Gastrocnemius medialis (tissue), 4 donors: ENCODE measurements at regions of chr1 and their contacts with region 1.

Region 1: DNA sequence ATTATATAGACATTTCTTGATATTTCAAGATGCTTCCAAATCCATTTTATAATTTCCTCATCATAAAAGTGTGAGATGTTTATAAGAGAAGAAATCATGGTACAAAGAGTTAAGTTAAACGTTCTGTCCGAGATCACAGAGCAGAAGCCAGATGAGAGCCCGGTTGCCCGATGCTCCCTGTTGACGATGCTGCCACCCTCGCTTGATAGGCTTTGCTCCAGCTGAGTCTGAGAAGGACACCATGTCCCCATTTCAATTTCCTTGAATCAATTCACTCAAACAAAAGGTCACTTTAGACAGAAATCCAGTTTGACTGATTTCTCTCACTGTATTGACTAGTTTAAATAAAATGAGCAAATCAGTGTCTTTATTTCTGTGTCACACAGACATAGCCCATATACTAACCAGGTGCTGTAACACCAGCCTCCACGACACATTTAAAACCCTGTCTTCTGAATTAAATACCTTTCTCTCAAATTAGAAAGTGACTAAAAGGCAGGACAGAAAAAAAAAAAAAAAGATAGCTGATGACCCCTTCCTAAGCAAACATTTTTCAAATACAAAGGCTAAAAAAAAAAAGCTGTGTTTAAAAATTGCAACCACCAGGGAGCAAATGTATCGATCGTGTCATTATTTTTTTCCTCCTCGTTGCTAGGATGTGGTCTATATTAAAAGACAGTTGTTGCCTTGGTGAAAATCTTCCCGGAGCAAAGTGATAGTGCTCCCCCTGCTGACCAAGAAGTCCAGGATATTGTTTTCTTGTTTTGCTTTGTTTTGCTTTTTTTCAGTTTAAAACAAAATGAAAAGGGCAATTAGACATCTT is 35.2 kb downstream of the DNASE2B start:
- DNase-seq: peak; percentile 24 to 26
- ATAC-seq: peak; percentile 84 to 88
- H3K4me3 ChIP-seq: peak overlapping the region; percentile 37 to 44 (median 44)
- H3K27ac ChIP-seq: peak overlapping the region in 2 of 4 donors; percentile 15 to 19
- H3K4me1 ChIP-seq: peaks cover 0 to 5% of the 10 kb centered on the region in 2 donors
- H3K27me3 ChIP-seq: no peaks in the 10 kb centered on the region
- CTCF ChIP-seq: peak; percentile 61 to 76 (median 74)
- POLR2A ChIP-seq: no peak

Region 2: DNA sequence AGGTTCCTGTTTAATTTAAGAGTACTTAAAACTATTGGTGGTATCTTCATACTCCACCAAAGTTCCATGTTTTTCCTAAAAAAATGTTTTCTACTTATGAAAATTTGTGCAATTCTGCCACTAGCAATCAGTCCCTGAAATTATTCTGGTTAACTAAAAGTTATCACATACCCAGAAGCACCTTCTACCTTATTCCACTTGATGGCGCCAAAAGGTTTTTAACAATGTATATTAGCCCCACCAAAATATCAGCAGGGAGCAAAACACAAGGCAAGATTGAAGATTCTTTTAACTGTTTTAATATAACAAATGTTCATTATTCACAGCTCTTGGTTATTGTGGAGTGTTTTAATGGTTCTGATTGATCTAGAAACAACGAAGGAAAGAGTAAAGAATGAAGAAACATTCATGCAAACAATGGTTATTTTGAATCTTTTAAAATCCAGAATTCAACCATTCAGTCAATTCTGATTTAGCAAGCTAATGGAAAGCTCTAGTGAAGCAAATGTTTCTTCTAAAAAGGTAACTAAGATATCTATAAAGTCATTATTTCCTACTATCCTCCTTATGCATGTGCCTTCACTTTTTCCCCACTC is 501.7 kb before region 1 on chr1:
- in situ Hi-C with region 1: loop called in 3 of 4 experiments (anchors 25 kb)
- intact Hi-C with region 1: loop called (anchors 5 kb)
- DNase-seq: no peak
- ATAC-seq: peak; percentile 61 to 88
- H3K4me3 ChIP-seq: no peak overlapping the region
- H3K27ac ChIP-seq: no peak overlapping the region
- H3K4me1 ChIP-seq: peaks cover 8 to 9% of the 10 kb centered on the region in 2 donors
- H3K27me3 ChIP-seq: no peaks in the 10 kb centered on the region
- CTCF ChIP-seq: peak in 4 of 5 experiments; percentile 58 to 78 (median 68)
- POLR2A ChIP-seq: no peak

Region 3: DNA sequence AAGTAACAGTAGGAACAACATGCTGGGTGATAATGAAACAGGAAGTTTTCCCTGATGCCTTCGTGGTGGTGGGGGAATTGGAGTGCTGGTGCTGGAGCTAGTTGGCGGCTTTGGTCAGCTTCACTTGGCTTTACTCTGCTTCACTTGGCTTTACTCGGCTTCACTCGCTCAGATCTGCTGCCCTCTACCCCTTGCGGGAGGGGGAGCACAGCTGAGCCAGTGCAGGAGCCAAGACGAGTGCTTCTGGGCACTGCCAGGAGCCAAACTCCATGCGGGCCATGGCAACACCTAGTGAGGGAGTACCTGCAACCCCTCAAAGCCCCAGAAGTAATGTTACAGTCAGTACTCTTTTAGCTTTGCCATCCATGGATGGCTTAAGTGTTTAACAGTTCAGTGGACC is 300.0 kb before region 1 on chr1:
- in situ Hi-C with region 1: loop called in 1 of 4 experiments (anchors 10 kb)
- intact Hi-C with region 1: no loop called
- DNase-seq: no peak
- ATAC-seq: no peak
- H3K4me3 ChIP-seq: no peak overlapping the region
- H3K27ac ChIP-seq: no peak overlapping the region
- H3K4me1 ChIP-seq: no peaks in the 10 kb centered on the region
- H3K27me3 ChIP-seq: no peaks in the 10 kb centered on the region
- CTCF ChIP-seq: no peak
- POLR2A ChIP-seq: no peak

Region 4: GRCh38 chr1:84164567-84165021 is 268.9 kb before region 1 on chr1:
- in situ Hi-C with region 1: no loop called
- intact Hi-C with region 1: loop called (anchors 5 kb)
- DNase-seq: no peak
- ATAC-seq: no peak
- H3K4me3 ChIP-seq: peak overlapping the region in 1 of 4 donors; percentile 4
- H3K27ac ChIP-seq: no peak overlapping the region
- H3K4me1 ChIP-seq: peaks cover 4 to 6% of the 10 kb centered on the region in 2 donors
- H3K27me3 ChIP-seq: no peaks in the 10 kb centered on the region
- CTCF ChIP-seq: no peak
- POLR2A ChIP-seq: no peak

Region 5: DNA sequence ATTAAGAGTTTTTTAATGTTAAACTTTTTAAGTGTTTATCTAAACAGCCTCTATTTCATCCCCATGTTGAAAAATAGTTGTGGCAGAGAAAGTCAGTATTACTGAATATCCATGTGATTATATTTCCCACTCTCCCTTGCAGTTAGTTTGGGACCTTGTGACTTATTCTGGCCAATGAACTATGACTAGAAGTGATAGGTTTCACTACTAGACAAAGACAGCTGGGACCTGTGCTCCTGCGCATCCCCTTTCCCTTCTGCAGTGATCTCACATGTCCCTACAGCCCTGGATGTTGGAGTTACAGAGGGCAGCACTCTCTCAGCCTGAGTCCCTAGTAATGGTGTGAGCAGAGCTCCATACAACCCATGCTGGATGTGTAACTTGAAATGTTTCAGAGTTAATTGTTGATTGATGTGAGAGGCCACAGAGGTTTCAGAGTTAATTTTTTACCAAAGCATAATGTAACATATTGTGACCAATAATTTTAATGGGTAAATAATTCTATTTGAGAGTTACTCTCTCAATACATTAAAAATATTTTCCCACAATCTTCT is 150.6 kb before region 1 on chr1:
- in situ Hi-C with region 1: no loop called
- intact Hi-C with region 1: no loop called
- DNase-seq: no peak
- ATAC-seq: no peak
- H3K4me3 ChIP-seq: no peak overlapping the region
- H3K27ac ChIP-seq: no peak overlapping the region
- H3K4me1 ChIP-seq: no peaks in the 10 kb centered on the region
- H3K27me3 ChIP-seq: no peaks in the 10 kb centered on the region
- CTCF ChIP-seq: no peak
- POLR2A ChIP-seq: no peak

Region 6: GRCh38 chr1:84298328-84298683 is 135.2 kb before region 1 on chr1:
- in situ Hi-C with region 1: loop called in 1 of 4 experiments (anchors 10 kb)
- intact Hi-C with region 1: loop called (anchors 2 kb)
- DNase-seq: peak; percentile 35 to 54
- ATAC-seq: peak; percentile 72 to 74
- H3K4me3 ChIP-seq: peak overlapping the region; percentile 79 to 94 (median 81)
- H3K27ac ChIP-seq: peak overlapping the region; percentile 88 to 95 (median 93)
- H3K4me1 ChIP-seq: peaks cover 26 to 37% of the 10 kb centered on the region in 2 donors
- H3K27me3 ChIP-seq: no peaks in the 10 kb centered on the region
- CTCF ChIP-seq: no peak
- POLR2A ChIP-seq: peak; percentile 53 to 77

Region 7: DNA sequence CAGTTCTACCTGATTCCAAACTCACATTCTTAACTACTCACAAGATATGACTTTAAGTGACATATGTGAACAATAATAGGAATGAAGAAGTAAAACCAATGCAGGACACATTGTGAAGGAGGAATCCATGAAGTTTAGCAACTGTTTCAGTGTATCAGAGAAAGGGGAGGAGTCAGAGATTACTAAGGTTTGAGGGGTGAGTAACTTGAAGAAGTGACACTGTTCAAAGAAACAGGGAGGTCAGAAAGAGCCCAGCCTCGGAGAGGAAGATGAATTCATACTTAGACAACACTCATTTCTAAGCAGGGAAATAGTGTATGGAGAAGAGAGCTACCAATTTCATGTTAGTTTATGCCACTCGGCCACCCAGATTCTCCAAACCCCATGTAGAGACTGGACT is 17.4 kb after region 1 on chr1:
- in situ Hi-C with region 1: no loop called
- intact Hi-C with region 1: no loop called
- DNase-seq: no peak
- ATAC-seq: no peak
- H3K4me3 ChIP-seq: no peak overlapping the region
- H3K27ac ChIP-seq: no peak overlapping the region
- H3K4me1 ChIP-seq: no peaks in the 10 kb centered on the region
- H3K27me3 ChIP-seq: no peaks in the 10 kb centered on the region
- CTCF ChIP-seq: no peak
- POLR2A ChIP-seq: no peak

Region 8: DNA sequence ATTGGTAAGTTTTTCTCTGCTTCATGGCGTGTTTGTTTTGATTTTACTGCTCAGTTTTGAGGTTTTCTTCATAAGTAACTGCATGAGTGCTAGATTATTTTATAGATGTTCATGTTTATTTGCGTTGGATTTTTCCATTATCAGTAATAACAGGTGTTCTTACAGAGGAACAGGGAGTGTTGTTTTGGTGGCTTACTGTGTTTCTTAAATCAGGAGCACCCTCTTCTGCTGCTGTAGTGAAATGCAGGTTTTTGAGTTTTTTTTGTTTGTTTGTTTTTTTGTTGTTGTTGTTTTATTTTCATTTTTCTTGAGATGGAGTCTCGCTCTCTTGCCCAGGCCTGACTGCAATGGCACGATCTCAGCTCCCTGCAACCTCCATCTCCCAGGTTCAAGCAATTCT is 108.2 kb after region 1 on chr1:
- in situ Hi-C with region 1: no loop called
- intact Hi-C with region 1: no loop called
- DNase-seq: no peak
- ATAC-seq: no peak
- H3K4me3 ChIP-seq: no peak overlapping the region
- H3K27ac ChIP-seq: no peak overlapping the region
- H3K4me1 ChIP-seq: no peaks in the 10 kb centered on the region
- H3K27me3 ChIP-seq: no peaks in the 10 kb centered on the region
- CTCF ChIP-seq: peak in 1 of 5 experiments; percentile 6
- POLR2A ChIP-seq: no peak

Region 9: DNA sequence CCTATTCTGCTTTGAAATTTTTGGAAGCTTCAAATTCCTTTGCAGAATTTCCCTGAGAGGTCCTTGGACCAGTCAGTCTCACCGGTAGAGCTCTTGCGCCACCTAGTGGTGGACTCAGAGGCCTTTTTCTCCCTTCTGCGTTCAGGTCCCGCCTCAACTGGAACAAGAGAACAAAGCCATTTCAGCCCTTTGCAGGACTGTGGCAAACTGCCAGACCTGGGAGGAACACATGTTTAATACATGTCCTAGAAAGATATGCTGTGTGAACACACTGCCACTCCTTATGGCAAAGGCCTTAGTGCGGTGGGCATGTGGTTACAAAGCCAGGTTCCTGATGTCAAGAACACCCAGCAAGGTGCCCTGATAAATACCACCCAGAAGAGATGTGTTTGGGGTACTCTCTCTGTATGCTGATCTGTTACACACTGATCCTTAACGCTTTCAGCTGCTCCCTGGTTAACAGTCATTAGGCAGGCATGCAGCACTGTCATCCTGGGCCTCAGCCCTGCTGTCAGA is 339.0 kb after region 1 on chr1:
- in situ Hi-C with region 1: loop called (anchors 25 kb)
- intact Hi-C with region 1: loop called (anchors 5 kb)
- DNase-seq: peak; percentile 22 to 52
- ATAC-seq: peak in 1 of 2 donors; percentile 75
- H3K4me3 ChIP-seq: no peak overlapping the region
- H3K27ac ChIP-seq: no peak overlapping the region
- H3K4me1 ChIP-seq: no peaks in the 10 kb centered on the region
- H3K27me3 ChIP-seq: no peaks in the 10 kb centered on the region
- CTCF ChIP-seq: peak; percentile 74 to 93 (median 83)
- POLR2A ChIP-seq: no peak